Activated T-helper 2 cell treated with anti-CD3 and anti-CD28 coated beads, Interferon-gamma antibody, Interleukin-2, Interleukin-4, amounts not matched to agents 10 μg/mL and 5 μg/mL and 100 μg/mL, durations not matched to agents 14 hours and 24 hours and 36 hours (primary cell): ENCODE measurements at regions of chr3 and their contacts with region 1.

Region 1: DNA sequence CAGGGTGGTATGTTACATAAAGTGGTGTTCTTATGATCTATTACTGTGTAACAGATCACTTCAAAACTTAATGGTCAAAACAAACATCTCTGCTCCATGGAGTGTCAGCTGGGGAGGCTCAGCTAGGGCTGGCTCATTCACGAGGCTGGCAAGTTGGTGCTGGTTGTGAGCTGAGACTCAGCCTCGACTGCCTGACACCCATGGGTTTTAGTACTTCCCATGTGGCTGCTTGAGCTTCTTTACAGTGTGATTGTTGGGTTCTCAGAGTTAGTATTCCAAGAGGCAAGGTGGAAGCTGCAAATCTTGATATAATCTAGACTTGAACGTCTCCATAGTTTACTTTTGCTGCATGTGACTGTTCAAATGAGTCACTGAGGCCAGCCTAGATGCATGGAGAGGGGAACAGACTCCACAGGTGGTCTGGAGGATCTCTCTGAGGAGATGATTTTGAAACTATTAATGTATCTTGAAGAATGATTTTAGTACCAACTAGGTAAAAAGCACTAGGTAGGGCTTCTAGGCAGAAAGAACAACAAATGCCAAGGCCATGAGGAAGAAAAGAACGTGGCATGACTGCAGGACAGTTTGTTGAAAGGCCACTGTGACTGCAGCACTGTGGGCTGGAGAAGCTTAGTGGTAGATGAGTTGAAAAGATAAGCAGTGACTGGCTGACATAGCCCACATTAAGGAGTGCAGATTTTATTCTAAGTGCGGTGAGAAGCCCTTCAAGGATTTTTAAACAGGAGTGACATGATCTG is 281.1 kb upstream of the PROK2 start:
- DNase-seq: no peak
- H3K4me3 Mint-ChIP-seq: no peak overlapping the region
- H3K27ac Mint-ChIP-seq: no peak overlapping the region
- H3K4me1 Mint-ChIP-seq: peaks cover 9% of the 10 kb centered on the region
- H3K27me3 Mint-ChIP-seq: peaks cover 20% of the 10 kb centered on the region

Region 2: DNA sequence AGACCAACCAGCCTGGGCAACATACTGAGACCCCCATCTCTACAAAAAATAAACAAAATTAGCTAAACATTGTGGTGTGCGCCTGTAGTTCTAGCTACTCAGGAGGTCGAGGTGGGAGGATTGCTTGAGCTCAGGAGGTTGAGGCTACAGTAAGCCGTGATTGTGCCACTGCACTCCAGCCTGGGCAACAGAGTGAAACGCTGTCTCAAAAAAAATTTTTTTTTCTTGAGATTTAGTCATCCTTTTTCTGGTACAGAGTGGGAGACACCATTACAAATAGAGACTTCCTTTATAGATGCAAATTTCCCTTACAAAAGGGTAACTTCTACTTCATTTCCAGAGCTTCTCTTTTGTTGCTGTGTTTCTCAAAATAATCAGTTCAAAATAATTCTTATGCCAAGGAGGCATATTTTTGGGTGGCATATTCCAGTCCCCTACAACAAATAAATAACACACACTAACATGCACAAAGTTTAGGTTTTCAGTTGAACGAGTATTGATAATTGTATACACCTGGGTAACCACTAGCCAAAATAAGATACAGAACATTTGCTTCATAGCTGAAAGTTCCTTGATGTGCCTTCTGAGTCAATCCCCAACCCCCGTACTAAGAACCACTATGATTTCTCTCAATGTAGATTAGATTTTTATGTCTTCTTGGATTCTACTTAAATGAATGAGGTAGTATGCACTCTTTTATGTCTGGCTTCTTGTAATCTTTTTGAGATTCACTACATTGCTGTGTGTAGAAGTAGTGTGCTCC is 32.2 kb before region 1 on chr3:
- intact Hi-C with region 1: loop called (anchors 2 kb)
- DNase-seq: no peak
- H3K4me3 Mint-ChIP-seq: no peak overlapping the region
- H3K27ac Mint-ChIP-seq: no peak overlapping the region
- H3K4me1 Mint-ChIP-seq: peaks cover 19% of the 10 kb centered on the region
- H3K27me3 Mint-ChIP-seq: peaks cover 8% of the 10 kb centered on the region

Region 3: DNA sequence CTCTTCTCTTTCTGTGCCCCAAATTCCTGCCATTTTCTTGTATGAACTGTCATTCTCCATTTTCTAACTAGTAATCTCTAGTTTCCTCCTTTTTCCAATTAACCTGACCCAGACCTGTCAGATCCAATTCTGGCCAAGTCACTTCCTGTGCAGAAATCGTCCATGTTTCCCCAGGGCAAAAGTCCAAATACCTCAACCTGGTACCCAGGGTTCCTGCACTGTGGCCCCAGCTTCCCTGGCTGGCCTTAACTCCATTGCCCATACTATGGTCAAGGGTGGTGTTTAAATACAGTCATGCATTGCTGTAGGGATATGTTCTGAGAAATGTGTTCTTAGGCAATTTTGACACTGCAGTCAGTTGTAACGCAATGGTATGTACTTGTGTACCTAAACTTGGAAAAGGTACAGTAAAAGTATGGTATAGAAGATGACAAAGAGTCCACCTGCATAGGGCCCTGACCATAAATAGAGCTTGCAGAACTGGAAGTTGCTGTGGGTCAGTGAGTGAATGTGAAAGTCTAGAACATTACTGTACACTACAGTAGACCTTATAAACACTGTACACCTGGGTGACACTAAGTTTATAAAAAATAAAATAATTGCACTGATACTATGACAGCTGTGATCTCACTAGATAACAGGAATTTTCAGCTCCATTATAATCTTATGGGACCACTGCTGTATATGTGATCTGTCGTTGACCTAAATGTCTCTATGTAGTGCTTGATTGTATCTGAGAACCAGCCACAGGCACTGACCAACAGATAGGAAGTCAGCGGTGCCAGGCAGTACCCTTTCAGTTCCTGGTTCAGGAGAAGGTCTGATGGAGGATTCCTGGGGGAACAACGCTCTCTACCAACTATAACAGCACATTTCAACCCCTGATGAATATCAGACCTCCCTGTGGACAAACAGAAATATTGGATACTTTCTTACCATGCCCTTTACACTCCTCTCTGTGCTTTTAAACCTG is 55.0 kb after region 1 on chr3:
- intact Hi-C with region 1: no loop called
- DNase-seq: no peak
- H3K4me3 Mint-ChIP-seq: no peak overlapping the region
- H3K27ac Mint-ChIP-seq: no peak overlapping the region
- H3K4me1 Mint-ChIP-seq: no peaks in the 10 kb centered on the region
- H3K27me3 Mint-ChIP-seq: peaks cover 3% of the 10 kb centered on the region